ENCODE measurements at regions of chr6 and their contacts with region 1.

Region 1: GRCh38 chr6:157323255-157323965 is at the start of gene TMEM242:
- DNase-seq: peak; percentile 95
- H3K4me3 ChIP-seq: peak within 1 kb of the TSS; percentile 73
- H3K27ac ChIP-seq: peak within 1 kb of the TSS; percentile 79
- H3K4me1 ChIP-seq: peaks cover 9% of the 10 kb centered on the region
- H3K27me3 ChIP-seq: no peaks in the 10 kb centered on the region
- CTCF ChIP-seq: peak; percentile 38; the same call in 1 of the 2 replicates
- total RNA-seq, gene TMEM242: 13.2 and 13.5 TPM in 2 replicates

Region 2: GRCh38 chr6:157379656-157380454 is 56.4 kb after region 1 on chr6:
- CTCF ChIA-PET with region 1: no interaction called
- POLR2A ChIA-PET with region 1: no interaction called
- intact Hi-C with region 1: loop called (anchors 2 kb)
- DNase-seq: peak; percentile 97
- H3K4me3 ChIP-seq: peak overlapping the region; percentile 96
- H3K27ac ChIP-seq: peak overlapping the region; percentile 69
- H3K4me1 ChIP-seq: peaks cover 4% of the 10 kb centered on the region
- H3K27me3 ChIP-seq: peaks cover 8% of the 10 kb centered on the region
- CTCF ChIP-seq: no peak